Activated naive CD4-positive, alpha-beta T cell treated with anti-CD3 and anti-CD28 coated beads for 36 hours (primary cell): ENCODE measurements at regions of chr22 and their contacts with region 1.

Region 1: DNA sequence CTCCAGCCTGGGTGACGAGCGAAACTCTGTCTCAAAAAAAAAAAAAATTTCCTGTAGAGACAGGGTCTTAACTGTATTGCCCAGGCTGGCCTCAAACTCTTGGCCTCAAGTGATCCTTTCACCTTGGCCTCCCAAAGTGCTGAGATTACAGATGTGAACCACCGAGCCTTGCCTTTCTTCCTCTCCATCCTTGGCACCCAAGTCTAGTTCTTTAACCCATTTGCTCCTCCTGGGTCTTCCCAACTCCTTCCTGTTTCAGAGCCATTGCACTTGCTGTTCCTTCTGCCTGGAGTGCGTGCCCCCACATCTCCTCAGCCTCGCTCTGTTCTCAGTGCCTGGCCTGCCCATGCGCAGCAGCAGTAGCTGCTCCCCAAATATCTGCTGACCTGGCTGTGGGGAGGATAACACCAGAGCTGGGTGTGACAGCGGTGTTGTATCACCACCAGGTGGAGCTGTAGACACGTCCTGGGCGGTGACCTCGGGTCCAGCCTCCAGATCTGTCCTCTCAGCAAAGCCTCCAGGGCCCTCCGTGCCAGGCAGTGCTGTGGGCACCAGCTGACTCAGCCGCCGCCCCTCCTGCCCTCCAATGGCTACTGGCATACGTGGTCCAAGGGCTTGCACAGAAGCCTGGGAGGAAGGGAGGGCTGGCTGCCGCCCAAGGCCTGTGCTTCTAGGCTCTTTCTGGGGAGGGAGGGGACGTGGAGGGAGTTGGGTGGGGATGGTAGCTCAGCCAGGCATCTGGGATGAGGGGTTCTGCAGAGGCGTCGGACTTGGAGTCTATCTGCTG is 22.0 kb downstream of the TEF start:
- DNase-seq: peak; percentile 92
- H3K4me3 Mint-ChIP-seq: no peak overlapping the region
- H3K27ac Mint-ChIP-seq: no peak overlapping the region
- H3K4me1 Mint-ChIP-seq: peaks cover 12% of the 10 kb centered on the region
- H3K27me3 Mint-ChIP-seq: no peaks in the 10 kb centered on the region

Region 2: GRCh38 chr22:41146573-41146972 is 257.2 kb before region 1 on chr22:
- CTCF ChIA-PET with region 1: no interaction called
- intact Hi-C with region 1: no loop called
- DNase-seq: no peak
- H3K4me3 Mint-ChIP-seq: no peak overlapping the region
- H3K27ac Mint-ChIP-seq: no peak overlapping the region
- H3K4me1 Mint-ChIP-seq: no peaks in the 10 kb centered on the region
- H3K27me3 Mint-ChIP-seq: no peaks in the 10 kb centered on the region

Region 3: GRCh38 chr22:41334215-41334614 is 69.5 kb before region 1 on chr22:
- CTCF ChIA-PET with region 1: no interaction called
- intact Hi-C with region 1: no loop called
- DNase-seq: no peak
- H3K4me3 Mint-ChIP-seq: no peak overlapping the region
- H3K27ac Mint-ChIP-seq: no peak overlapping the region
- H3K4me1 Mint-ChIP-seq: peaks cover 11% of the 10 kb centered on the region
- H3K27me3 Mint-ChIP-seq: no peaks in the 10 kb centered on the region

Region 4: DNA sequence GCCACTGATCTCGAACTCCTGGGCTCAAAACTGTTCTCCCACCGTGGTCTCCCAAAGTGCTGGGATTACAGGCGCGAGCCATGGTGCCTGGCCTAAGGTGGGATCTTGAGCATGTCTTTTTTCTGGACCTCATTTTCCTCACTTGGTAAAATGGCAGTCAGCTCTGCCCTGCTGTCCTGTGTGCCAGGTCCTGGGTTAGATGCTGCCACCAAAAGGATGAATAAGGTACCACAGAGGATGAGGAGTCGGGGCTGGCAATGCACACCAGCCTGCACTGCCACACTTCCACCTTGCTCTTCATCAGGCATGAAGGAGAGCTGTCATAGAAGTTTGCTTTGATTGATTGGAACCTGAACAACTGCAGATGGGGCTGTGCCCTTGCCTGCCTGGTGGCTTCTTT is 97.5 kb after region 1 on chr22:
- CTCF ChIA-PET with region 1: interaction called, 32 read pairs
- intact Hi-C with region 1: loop called (anchors 1 kb)
- DNase-seq: peak; percentile 48
- H3K4me3 Mint-ChIP-seq: no peak overlapping the region
- H3K27ac Mint-ChIP-seq: no peak overlapping the region
- H3K4me1 Mint-ChIP-seq: no peaks in the 10 kb centered on the region
- H3K27me3 Mint-ChIP-seq: no peaks in the 10 kb centered on the region

Region 5: DNA sequence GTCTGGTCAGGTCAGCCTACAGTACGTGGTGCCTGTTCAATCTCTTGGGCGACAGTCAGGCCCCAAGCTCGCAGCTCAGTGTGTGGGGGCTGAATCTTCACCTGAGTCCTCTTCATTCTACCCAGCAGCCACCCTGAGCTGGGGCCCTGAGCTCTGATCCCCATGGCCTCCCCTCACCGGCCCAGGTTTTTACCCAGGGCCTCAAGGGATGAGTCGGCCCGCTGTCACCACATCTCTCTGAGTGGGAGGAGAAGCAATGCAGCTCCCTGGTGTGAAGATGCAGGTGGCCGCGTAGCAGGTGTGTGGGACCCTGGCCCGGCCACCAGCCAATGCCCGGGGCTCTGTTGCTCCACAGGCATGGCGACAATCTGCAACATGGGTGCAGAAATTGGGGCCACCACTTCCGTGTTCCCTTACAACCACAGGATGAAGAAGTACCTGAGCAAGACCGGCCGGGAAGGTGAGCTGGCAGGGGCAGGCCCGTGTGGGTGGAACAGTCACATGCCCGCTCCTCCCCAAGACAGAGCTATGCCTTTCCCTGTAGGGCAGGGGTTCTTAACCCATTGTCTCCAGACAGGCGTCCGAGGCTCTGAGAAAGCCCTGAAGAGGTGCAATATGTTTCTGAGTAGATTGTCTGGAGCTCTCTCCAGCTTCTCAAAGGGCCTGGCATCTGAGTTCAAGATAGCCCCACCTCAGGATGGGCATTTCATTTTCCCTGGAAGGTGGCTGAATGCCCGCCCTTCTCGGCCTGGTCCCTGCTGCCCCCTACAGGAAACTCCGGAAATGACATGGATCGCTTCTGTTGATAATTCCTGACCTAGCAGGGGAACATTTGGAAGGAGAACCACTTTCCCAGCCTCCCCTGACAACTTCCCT is 113.7 kb after region 1 on chr22:
- CTCF ChIA-PET with region 1: interaction called, 84 read pairs
- intact Hi-C with region 1: loop called (anchors 1 kb)
- DNase-seq: peak; percentile 56
- H3K4me3 Mint-ChIP-seq: no peak overlapping the region
- H3K27ac Mint-ChIP-seq: no peak overlapping the region
- H3K4me1 Mint-ChIP-seq: peaks cover 11% of the 10 kb centered on the region
- H3K27me3 Mint-ChIP-seq: no peaks in the 10 kb centered on the region

Region 6: DNA sequence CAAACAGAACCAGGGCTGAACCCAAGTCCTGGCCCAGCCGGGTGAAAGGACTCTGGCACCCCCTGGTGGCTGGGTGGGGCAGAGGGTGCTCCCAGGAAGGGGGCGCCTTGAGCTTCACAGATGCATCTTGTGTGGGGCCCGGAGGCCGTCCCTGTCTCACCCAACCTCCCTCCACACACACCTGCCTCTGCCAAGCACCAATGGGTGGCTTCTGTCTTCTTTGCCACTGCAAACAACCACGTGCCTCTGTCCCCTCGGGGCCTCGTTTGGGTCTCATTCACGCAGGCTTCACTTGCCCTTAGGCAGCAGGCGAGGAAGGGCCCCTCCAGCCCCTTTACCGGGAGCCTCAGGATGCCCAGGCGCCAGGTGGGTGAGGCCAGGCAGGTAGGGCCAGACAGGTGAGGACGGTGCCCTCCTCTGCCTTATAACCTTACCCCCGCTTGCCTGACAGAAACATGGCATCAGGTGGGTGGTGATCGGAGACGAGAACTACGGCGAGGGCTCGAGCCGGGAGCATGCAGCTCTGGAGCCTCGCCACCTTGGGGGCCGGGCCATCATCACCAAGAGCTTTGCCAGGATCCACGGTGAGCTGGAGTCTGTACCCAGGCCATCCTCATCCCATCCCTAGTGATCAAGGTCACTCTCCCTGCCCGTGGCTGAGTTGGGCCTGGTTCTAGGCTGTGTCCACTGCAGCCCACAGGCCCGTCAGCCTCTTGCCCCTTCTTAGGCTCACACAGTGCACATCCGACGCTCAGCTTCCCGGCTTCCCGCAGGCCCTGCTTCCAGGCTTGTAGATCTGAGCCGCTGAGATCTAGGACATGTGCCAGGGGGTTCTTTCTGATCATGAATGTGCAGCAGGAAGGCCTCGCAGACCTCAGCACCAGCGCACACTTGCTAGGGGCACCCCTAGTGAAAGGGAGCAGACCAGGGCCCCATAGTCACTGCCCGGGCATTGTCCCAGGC is 123.4 kb after region 1 on chr22:
- CTCF ChIA-PET with region 1: interaction called, 64 read pairs
- intact Hi-C with region 1: loop called (anchors 1 kb)
- DNase-seq: peak; percentile 60
- H3K4me3 Mint-ChIP-seq: no peak overlapping the region
- H3K27ac Mint-ChIP-seq: no peak overlapping the region
- H3K4me1 Mint-ChIP-seq: peaks cover 19% of the 10 kb centered on the region
- H3K27me3 Mint-ChIP-seq: no peaks in the 10 kb centered on the region

Region 7: DNA sequence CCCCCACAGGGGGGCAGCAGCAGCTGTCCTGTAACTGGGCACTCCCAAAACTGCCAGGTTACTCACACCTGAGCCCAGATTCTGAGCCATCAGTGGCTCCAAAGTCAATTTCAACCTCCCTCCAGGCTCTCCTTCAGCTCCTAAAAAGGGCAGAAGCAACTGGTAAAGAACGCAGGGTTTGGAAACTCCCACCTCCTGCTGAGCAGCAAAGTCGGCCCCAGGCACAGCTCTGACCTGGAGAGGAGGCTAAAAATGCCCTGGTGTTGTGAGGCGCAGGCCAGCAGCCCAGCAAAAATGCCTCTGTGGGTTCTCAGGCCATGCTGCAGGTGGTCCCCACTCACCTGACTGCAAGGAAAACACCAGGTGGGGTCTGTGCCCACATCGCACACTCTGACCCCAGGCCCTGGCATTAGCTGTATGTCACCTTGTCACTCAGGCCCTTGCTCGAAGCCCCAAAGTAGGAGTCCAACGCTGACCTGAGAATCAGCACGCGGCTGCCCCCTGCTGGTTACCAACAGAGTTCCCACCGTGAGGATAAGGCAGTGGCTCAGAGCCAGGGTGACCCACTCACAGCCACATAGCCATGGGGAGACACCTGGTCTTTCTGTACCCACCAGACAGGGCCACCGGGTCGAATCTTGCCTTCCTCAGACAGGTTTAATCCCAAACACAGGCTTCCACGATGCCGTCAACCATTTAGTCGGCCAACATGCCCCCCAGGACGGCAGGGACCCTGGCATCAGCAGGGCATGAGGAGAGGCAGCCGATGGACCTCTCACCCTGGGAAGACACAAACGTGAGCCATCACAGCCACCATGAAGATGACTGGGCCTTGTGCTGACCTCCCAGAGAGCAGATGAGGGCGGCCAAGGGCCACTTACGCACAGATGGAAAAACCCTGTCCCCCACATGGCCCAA is 129.4 kb after region 1 on chr22:
- CTCF ChIA-PET with region 1: interaction called, 64 read pairs
- intact Hi-C with region 1: loop called (anchors 1 kb)
- DNase-seq: peak; percentile 78
- H3K4me3 Mint-ChIP-seq: no peak overlapping the region
- H3K27ac Mint-ChIP-seq: no peak overlapping the region
- H3K4me1 Mint-ChIP-seq: peaks cover 2% of the 10 kb centered on the region
- H3K27me3 Mint-ChIP-seq: no peaks in the 10 kb centered on the region

Region 8: DNA sequence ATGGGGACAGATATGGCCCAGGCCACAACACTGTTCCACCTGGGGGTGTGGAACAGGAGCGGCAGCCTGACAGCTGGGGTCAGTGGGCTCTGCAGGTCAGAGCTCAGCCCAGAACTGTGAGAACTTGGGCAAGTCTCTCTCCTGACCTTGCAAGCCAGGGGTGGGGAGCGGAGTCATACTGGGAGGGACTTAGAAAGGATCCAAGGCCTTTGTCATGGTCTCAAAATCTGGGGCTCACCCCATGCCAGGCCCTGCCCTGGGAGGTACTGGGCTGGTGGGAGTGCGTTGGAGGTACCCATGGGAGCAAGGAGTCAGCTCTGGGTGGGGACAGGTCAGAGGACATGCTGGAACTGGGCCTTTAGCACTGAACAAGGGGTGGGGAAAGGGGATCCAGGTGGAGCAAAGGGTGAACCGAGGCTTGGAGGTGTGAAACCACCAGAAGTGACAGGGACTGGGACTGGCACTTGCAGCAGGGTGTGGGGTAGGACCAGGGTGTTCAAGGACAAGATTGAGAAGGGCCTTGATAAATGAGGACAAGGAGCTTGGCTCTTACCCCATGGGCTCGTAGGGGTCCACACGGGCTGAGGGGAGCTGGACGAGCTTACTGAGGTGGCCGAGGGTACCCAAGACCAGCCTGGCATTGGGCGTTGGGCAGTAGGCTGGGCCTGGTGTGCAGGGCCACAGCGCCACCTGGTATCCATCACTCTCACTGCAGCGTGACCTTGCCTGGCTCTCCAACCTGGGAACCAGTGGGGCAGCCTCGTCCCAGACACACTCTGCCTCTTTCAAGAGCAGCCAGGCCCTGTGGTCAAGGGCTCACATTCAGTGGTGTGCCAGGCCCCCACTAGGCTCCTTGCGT is 193.3 kb after region 1 on chr22:
- CTCF ChIA-PET with region 1: no interaction called
- intact Hi-C with region 1: loop called (anchors 5 kb)
- DNase-seq: peak; percentile 60
- H3K4me3 Mint-ChIP-seq: no peak overlapping the region
- H3K27ac Mint-ChIP-seq: no peak overlapping the region
- H3K4me1 Mint-ChIP-seq: no peaks in the 10 kb centered on the region
- H3K27me3 Mint-ChIP-seq: no peaks in the 10 kb centered on the region